ENCODE measurements at regions of chr7 and their contacts with region 1.

Region 1: DNA sequence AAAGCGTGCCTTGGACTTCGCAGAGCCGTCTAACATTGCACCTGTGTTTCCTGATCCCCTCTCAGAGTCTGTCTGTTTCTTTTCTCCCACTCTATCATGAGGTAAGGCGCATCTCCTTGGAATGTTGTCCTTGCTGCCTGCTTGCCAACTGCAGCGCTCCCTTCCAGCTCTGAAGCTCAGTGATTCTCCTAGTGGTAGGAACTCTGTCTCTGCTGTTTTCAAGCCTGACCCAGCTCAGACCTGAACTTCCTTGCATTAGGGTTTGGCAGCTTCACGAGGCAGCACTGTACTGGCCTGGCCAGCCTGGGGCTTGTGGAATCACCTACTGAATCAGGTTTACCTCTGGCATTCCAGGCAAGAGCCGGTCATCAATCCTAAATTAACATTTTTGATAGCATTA is 123.9 kb downstream of the CREB5 start:
- DNase-seq: no peak
- ATAC-seq: no peak
- H3K4me3 ChIP-seq: no peak overlapping the region
- H3K27ac ChIP-seq: no peak overlapping the region
- H3K4me1 ChIP-seq: peaks cover 17% of the 10 kb centered on the region
- H3K27me3 ChIP-seq: no peaks in the 10 kb centered on the region
- CTCF ChIP-seq: no peak; a peak in 1 of 6 replicates
- EP300 ChIP-seq: no peak
- POLR2A ChIP-seq: no peak
- RAD21 ChIP-seq: no peak

Region 2: DNA sequence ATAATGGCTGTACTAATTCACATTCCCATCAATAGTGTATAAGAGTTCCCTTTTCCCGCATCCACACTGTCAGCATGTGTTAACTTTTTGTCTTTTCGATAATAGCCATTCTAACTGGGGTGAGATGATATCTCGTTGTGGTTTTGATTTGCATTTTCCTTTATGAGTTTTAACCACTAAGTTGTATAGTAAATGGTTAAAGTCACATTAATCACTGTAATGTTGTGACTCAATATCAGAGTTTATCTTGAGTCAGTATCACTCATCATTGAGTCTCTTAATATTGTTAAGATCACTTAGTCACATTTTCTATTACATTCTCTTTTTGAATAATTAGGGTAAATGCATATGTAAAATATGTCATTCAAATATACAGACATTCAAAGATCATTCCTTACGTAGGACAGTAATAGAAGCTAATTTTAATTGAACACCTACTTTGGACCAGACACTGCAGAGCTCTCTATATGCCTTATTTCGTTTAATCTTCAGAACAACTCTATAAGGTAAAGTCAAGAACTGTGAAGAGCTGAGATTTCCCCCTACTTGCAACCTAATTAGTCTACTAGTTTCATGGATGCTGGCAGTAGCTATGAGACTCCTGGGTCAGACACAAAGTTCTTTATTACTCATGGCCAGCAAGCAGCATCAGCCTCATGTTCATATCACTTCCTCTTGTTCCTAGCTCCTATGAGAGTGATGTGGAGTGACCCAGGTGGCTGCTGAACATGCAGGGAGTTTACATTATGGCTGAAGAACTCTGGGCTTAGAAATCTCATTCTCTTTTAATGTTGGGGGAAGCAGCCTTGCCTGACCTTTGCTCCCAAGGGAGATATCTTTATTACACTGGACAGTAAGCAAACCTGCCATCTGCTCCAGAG is 93.5 kb before region 1 on chr7:
- CTCF ChIA-PET with region 1: interaction called, 4 read pairs
- POLR2A ChIA-PET with region 1: no interaction called
- RAD21 ChIA-PET with region 1: interaction called, 5 read pairs
- SMC1A ChIA-PET with region 1: interaction called, 3 read pairs
- in situ Hi-C with region 1: no loop called
- intact Hi-C with region 1: loop called (anchors 1 kb)
- DNase-seq: no peak
- ATAC-seq: peak; percentile 92
- H3K4me3 ChIP-seq: no peak overlapping the region
- H3K27ac ChIP-seq: no peak overlapping the region
- H3K4me1 ChIP-seq: no peaks in the 10 kb centered on the region; the same call in 1 of the 2 replicates
- H3K27me3 ChIP-seq: no peaks in the 10 kb centered on the region; a peak in 1 of 4 replicates
- CTCF ChIP-seq: no peak
- EP300 ChIP-seq: peak in 1 of 2 experiments; percentile 63; a peak in 1 of 4 replicates
- POLR2A ChIP-seq: no peak
- RAD21 ChIP-seq: no peak

Region 3: DNA sequence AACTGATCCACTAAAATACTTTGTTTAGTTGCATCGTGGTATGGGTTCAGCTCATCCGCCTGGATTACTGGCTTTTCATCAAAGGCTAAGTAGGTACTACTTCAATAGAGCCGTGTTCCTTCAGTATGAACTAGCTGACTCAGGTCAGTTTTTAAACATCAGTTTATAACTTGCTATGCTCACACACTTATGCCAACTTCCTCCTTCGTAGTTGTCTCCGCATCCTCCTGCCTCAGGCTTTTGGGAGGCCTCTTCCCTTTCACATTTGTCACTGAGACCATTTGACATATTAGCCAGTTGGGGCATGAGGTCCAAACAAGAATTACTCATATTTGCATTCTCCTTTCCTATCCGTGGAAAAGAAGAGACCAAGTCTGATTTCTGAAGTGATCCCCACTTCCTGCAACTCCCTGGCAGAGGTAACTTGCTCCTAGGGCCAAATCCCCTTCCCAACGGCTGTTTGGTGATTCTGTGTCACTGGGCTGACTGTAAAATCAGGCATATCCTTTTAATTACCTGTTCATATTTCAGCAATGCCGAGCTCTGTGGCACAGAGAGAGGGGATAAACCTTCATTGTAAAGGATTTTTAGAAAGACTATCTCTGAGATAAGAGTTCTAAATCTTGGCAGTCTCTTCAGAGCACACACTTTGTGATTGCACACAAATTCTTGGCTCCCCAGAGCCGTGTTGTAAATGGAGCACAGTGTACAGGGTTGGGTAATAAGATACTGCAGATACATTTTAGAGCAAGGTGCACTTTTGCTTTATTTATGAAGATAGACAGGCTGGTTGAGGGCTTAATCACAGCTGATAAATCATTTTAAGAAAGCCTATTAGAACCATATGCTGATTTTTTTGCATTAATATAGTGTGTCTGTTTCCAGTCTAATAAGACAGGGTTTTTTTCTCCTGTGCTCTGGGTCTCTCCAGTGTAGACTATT is 15.9 kb before region 1 on chr7:
- CTCF ChIA-PET with region 1: interaction called, 11 read pairs
- POLR2A ChIA-PET with region 1: interaction called, 3 read pairs
- RAD21 ChIA-PET with region 1: interaction called, 7 read pairs
- SMC1A ChIA-PET with region 1: interaction called, 89 read pairs
- in situ Hi-C with region 1: no loop called
- intact Hi-C with region 1: no loop called
- DNase-seq: no peak
- ATAC-seq: no peak
- H3K4me3 ChIP-seq: no peak overlapping the region
- H3K27ac ChIP-seq: no peak overlapping the region
- H3K4me1 ChIP-seq: peaks cover 14% of the 10 kb centered on the region
- H3K27me3 ChIP-seq: no peaks in the 10 kb centered on the region
- CTCF ChIP-seq: no peak
- EP300 ChIP-seq: no peak
- POLR2A ChIP-seq: no peak
- RAD21 ChIP-seq: no peak

Region 4: GRCh38 chr7:28621369-28621841 is 85.1 kb after region 1 on chr7:
- CTCF ChIA-PET with region 1: interaction called, 6 read pairs
- POLR2A ChIA-PET with region 1: interaction called, 3 read pairs
- RAD21 ChIA-PET with region 1: interaction called, 13 read pairs
- SMC1A ChIA-PET with region 1: interaction called, 8 read pairs
- in situ Hi-C with region 1: no loop called
- intact Hi-C with region 1: loop called (anchors 1 kb)
- DNase-seq: peak; percentile 45
- ATAC-seq: peak; percentile 82
- H3K4me3 ChIP-seq: no peak overlapping the region
- H3K27ac ChIP-seq: peak overlapping the region; percentile 45; the same call in 1 of the 2 replicates
- H3K4me1 ChIP-seq: peaks cover 3% of the 10 kb centered on the region; the same call in 1 of the 2 replicates
- H3K27me3 ChIP-seq: no peaks in the 10 kb centered on the region
- CTCF ChIP-seq: no peak
- EP300 ChIP-seq: peak; percentile 76 to 90; a peak in 3 of 4 replicates
- POLR2A ChIP-seq: no peak
- RAD21 ChIP-seq: 0 out of 2 replicates have a peak, but pooled peaks have one; percentile 19